Endothelial cell of umbilical vein (primary cell): ENCODE measurements at regions of chr10 and their contacts with region 1.

Region 1: GRCh38 chr10:114869520-114869892 is 47.9 kb downstream of the FHIP2A start:
- DNase-seq: peak; percentile 93
- H3K4me3 ChIP-seq: no peak overlapping the region
- H3K27ac ChIP-seq: peak overlapping the region; percentile 79
- H3K4me1 ChIP-seq: peaks cover 23% of the 10 kb centered on the region
- H3K27me3 ChIP-seq: no peaks in the 10 kb centered on the region
- CTCF ChIP-seq: no peak
- POLR2A ChIP-seq: no peak

Region 2: GRCh38 chr10:114437456-114438292 is 431.8 kb before region 1 on chr10:
- CTCF ChIA-PET with region 1: no interaction called
- POLR2A ChIA-PET with region 1: no interaction called
- dilution Hi-C with region 1: no loop called
- intact Hi-C with region 1: no loop called
- DNase-seq: no peak
- H3K4me3 ChIP-seq: no peak overlapping the region
- H3K27ac ChIP-seq: no peak overlapping the region
- H3K4me1 ChIP-seq: no peaks in the 10 kb centered on the region
- H3K27me3 ChIP-seq: no peaks in the 10 kb centered on the region
- CTCF ChIP-seq: peak; percentile 34 to 41
- POLR2A ChIP-seq: no peak

Region 3: GRCh38 chr10:114856544-114857282 is 12.8 kb before region 1 on chr10:
- CTCF ChIA-PET with region 1: interaction called, 24 read pairs
- POLR2A ChIA-PET with region 1: interaction called, 3 read pairs
- dilution Hi-C with region 1: no loop called
- intact Hi-C with region 1: loop called (anchors 1 kb)
- DNase-seq: peak; percentile 81
- H3K4me3 ChIP-seq: peak overlapping the region in 1 of 3 experiments; percentile 38
- H3K27ac ChIP-seq: peak overlapping the region; percentile 94
- H3K4me1 ChIP-seq: peaks cover 32% of the 10 kb centered on the region
- H3K27me3 ChIP-seq: no peaks in the 10 kb centered on the region
- CTCF ChIP-seq: no peak
- POLR2A ChIP-seq: no peak

Region 4: DNA sequence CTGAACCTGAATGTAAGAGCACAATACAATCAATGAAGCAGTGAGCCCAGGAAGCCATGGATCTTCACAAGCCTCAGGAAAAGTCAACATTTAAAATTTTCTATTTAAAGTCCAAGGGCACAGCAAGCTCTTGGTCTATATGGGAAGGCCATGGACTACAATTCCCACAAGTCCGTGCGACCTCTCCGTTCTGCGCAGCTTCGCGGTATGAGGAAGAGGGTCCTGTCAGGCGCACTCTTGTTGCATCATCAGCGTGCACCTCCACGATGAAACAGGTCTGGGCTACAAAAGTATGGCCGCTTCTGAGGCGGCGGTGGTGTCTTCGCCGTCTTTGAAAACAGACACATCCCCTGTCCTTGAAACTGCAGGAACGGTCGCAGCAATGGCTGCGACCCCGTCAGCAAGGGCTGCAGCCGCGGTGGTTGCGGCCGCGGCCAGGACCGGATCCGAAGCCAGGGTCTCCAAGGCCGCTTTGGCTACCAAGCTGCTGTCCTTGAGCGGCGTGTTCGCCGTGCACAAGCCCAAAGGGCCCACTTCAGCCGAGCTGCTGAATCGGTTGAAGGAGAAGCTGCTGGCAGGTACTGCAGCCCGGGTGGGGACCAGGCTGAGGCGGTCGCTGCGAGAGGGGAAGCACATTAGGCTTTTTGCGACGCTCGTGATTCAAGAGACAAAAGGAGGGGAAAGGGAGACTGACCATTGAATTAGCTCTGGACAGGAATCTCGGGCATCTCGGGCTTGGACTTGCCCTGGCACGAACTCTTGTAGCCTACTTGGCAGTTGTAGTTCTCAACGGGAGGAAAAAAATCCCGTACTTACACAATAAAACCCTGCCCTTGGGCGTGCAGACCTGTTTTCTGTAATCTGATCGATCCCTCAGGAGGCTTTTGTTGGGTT is 68.7 kb after region 1 on chr10 and contains the start of gene TRUB1:
- CTCF ChIA-PET with region 1: no interaction called
- POLR2A ChIA-PET with region 1: no interaction called
- dilution Hi-C with region 1: no loop called
- intact Hi-C with region 1: loop called (anchors 1 kb)
- DNase-seq: peak; percentile 95
- H3K4me3 ChIP-seq: peak within 1 kb of the TSS; percentile 73 to 90 (median 75)
- H3K27ac ChIP-seq: peak within 1 kb of the TSS; percentile 75
- H3K4me1 ChIP-seq: peaks cover 12% of the 10 kb centered on the region
- H3K27me3 ChIP-seq: peaks cover 0 to 3% of the 10 kb centered on the region in 2 experiments
- CTCF ChIP-seq: no peak
- POLR2A ChIP-seq: peak; percentile 71
- total RNA-seq, gene TRUB1: 15.1 and 16.7 TPM in 2 replicates